PC-9 (cell line): ENCODE measurements at regions of chr7 and their contacts with region 1.

Region 1: DNA sequence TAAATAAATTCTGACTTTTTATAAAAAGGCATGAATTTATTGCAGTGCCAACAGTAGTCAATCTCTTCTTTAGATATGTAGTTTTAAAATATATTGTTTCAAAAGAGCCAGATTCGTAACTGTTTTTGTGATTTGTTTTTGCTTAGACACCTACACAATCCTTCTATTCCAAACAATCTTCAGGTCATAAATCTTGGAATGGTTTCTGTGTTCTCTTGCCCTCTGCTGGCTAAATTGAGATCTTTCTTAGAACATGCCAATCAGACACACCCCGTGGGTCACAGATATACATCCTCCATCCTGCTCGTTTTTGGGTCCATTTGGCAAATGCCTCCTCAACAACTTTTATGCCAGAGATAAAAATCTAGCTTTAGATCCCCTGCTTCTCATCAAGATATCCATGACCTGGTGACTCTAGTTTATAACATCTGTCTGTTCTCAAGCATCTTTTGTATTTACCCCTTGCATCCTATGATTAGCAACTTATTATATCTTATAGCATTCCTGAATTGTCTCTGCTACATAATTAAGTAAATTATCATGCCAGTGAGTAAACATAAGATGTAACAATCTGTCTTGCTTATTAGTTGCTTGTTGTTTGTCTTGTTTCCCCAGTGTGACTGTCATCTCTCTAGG is 35.3 kb upstream of the IFRD1 start:
- DNase-seq: no peak
- H3K4me3 ChIP-seq: no peak overlapping the region
- H3K27ac ChIP-seq: no peak overlapping the region
- H3K4me1 ChIP-seq: no peaks in the 10 kb centered on the region
- H3K27me3 ChIP-seq: no peaks in the 10 kb centered on the region
- CTCF ChIP-seq: peak; percentile 72

Region 2: GRCh38 chr7:111752022-111752582 is 662.9 kb before region 1 on chr7:
- CTCF ChIA-PET with region 1: no interaction called
- POLR2A ChIA-PET with region 1: no interaction called
- intact Hi-C with region 1: loop called (anchors 1 kb)
- DNase-seq: peak in 1 of 2 experiments; percentile 63
- H3K4me3 ChIP-seq: no peak overlapping the region
- H3K27ac ChIP-seq: no peak overlapping the region
- H3K4me1 ChIP-seq: peaks cover 14% of the 10 kb centered on the region; the same call in 1 of the 2 replicates
- H3K27me3 ChIP-seq: no peaks in the 10 kb centered on the region
- CTCF ChIP-seq: peak; percentile 87

Region 3: DNA sequence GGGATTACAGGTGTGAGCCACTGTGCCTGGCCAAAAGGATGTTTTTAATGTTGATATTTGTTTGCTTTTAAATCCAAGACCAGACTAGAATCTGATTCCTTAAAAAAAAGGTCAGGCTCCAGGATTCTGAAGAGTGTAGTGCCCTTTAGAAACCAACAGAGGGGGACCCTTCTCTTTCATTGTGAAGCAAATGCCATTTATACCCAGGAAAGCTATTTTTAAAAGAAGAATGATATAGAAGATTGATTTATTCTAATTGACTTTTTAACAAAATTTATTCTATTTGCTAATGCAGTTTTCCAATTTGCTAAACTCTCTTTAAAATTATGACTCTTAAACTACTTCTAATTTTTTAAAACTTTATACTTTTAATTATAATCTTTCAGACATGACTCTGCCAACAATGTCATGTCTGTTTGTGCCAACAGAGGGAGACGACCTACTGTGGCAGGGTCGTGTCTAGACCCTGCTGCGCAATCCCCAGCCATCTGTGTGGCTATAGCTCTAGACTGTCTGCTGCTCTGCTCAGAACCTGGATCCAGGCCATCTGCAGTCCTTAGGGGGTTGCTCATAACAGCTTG is 651.7 kb before region 1 on chr7:
- CTCF ChIA-PET with region 1: no interaction called
- POLR2A ChIA-PET with region 1: no interaction called
- intact Hi-C with region 1: loop called (anchors 1 kb)
- DNase-seq: no peak
- H3K4me3 ChIP-seq: no peak overlapping the region
- H3K27ac ChIP-seq: no peak overlapping the region
- H3K4me1 ChIP-seq: no peaks in the 10 kb centered on the region
- H3K27me3 ChIP-seq: no peaks in the 10 kb centered on the region
- CTCF ChIP-seq: peak; percentile 88

Region 4: DNA sequence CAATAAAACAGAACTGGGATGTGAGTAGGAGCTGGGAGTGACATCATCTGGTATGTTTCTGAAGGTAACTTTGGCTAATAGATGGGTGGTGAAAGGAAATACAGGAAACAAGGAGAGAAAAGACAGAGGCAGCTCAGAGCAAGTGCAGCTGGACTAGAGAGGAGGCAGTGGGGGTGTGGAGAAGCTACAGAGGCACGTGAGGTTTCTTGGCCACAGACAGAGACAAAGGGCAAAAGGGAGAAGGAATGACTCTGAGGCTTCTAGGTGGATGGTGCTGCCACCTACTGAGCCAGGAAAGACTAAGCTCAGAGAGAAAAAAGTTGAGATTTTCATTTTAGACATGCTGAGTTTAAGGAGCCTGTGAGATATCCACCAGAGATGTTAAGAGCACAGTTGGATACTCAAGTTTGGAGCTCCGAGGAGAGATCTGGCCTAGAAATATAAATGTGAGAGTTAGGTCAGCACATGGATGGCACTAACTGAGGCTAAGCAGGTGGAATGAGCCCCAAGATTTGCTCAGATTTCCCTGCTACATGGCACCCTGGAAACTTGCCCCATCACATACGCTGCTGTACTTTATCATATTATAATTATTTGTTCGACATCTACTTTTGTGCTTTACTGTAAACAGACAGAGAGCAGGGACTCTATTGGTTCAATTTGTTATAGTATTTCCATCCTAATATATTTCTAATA is 559.7 kb before region 1 on chr7:
- CTCF ChIA-PET with region 1: no interaction called
- POLR2A ChIA-PET with region 1: no interaction called
- intact Hi-C with region 1: loop called (anchors 2 kb)
- DNase-seq: peak in 1 of 2 experiments; percentile 28
- H3K4me3 ChIP-seq: no peak overlapping the region
- H3K27ac ChIP-seq: no peak overlapping the region
- H3K4me1 ChIP-seq: no peaks in the 10 kb centered on the region
- H3K27me3 ChIP-seq: no peaks in the 10 kb centered on the region
- CTCF ChIP-seq: peak; percentile 60

Region 5: DNA sequence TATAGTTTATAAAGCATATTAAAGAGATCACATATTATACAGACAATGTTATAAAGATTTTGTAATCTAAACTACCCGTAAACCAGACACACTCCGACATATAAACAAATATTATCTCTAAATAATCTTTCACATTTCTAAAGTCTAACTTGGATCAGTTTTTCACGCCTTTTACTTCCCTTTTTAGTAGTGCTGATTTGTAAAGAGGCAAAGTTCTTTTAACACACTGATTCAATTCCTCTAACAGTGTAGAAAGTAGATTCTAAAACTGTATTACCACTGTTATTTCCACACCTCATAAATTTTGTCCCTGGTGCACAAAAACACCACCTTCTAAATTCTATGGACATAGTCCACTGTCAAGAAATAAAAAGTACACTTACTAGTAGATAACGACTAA is 439.6 kb before region 1 on chr7:
- CTCF ChIA-PET with region 1: no interaction called
- POLR2A ChIA-PET with region 1: no interaction called
- intact Hi-C with region 1: loop called (anchors 10 kb)
- DNase-seq: no peak
- H3K4me3 ChIP-seq: no peak overlapping the region
- H3K27ac ChIP-seq: no peak overlapping the region
- H3K4me1 ChIP-seq: no peaks in the 10 kb centered on the region
- H3K27me3 ChIP-seq: no peaks in the 10 kb centered on the region
- CTCF ChIP-seq: no peak